Psoas muscle (tissue), 8 donors: ENCODE measurements at regions of chr13 and their contacts with region 1.

Region 1: GRCh38 chr13:37681300-37682032 is 82.9 kb upstream of the POSTN start:
- DNase-seq: no peak
- ATAC-seq: no peak
- H3K4me3 ChIP-seq: no peak overlapping the region
- H3K27ac ChIP-seq: no peak overlapping the region
- H3K4me1 ChIP-seq: no peaks in the 10 kb centered on the region
- H3K27me3 ChIP-seq: no peaks in the 10 kb centered on the region
- CTCF ChIP-seq: no peak

Region 2: DNA sequence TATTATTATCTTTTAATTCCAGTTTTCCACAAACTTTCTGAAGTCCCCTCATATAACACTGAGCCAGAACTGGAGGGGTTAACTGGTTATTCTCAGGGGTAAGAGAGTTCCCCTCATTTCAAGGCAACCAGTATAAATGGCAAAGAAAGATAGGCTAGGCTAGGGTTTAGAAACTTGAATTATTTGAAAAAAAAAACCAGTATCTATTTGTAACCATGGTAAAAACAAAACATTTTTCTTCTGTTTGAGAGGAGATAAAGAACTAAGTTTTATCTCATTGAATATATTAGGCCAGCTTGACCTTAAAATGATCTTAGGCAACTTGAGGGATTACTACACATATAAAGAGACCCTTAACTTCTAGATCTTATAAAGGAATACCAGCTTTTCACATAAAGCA is 641.6 kb before region 1 on chr13:
- intact Hi-C with region 1: no loop called
- DNase-seq: no peak
- ATAC-seq: no peak
- H3K4me3 ChIP-seq: no peak overlapping the region
- H3K27ac ChIP-seq: peak overlapping the region; percentile 44
- H3K4me1 ChIP-seq: peaks cover 3% of the 10 kb centered on the region
- H3K27me3 ChIP-seq: no peaks in the 10 kb centered on the region
- CTCF ChIP-seq: no peak

Region 3: GRCh38 chr13:39484506-39485313 is 1803.2 kb after region 1 on chr13:
- intact Hi-C with region 1: loop called in 1 of 2 experiments (anchors 10 kb)
- DNase-seq: no peak
- ATAC-seq: no peak
- H3K4me3 ChIP-seq: no peak overlapping the region
- H3K27ac ChIP-seq: no peak overlapping the region
- H3K4me1 ChIP-seq: no peaks in the 10 kb centered on the region
- H3K27me3 ChIP-seq: no peaks in the 10 kb centered on the region
- CTCF ChIP-seq: no peak